Esophagus muscularis mucosa (tissue), 4 donors: ENCODE measurements at regions of chr16 and their contacts with region 1.

Region 1: DNA sequence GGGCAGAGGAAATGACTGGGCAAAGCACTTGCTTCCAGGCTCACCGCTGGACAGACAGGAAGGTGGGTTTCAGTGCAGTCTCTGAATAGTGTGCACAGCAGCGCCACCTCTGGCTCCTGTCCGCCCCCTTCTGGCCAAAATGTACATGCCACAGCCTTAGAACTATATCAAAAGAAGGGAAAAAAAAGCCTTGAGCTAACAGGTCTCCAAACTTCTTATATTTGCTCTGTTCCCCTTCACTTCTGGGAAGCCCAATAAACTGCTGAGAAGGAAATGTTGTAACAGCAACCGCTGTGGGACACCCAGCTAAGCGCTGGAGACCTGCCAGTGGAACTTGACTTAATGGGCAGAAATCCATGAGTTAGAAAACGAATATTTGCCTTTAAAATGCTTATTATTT is 17.5 kb downstream of the COG7 start:
- DNase-seq: no peak
- H3K4me3 ChIP-seq: no peak overlapping the region
- H3K27ac ChIP-seq: no peak overlapping the region
- H3K4me1 ChIP-seq: peaks cover 0 to 30% (median 15%) of the 10 kb centered on the region in 4 donors
- H3K27me3 ChIP-seq: no peaks in the 10 kb centered on the region
- CTCF ChIP-seq: peak; percentile 75 to 82 (median 77)
- EP300 ChIP-seq: no peak
- POLR2A ChIP-seq: no peak

Region 2: DNA sequence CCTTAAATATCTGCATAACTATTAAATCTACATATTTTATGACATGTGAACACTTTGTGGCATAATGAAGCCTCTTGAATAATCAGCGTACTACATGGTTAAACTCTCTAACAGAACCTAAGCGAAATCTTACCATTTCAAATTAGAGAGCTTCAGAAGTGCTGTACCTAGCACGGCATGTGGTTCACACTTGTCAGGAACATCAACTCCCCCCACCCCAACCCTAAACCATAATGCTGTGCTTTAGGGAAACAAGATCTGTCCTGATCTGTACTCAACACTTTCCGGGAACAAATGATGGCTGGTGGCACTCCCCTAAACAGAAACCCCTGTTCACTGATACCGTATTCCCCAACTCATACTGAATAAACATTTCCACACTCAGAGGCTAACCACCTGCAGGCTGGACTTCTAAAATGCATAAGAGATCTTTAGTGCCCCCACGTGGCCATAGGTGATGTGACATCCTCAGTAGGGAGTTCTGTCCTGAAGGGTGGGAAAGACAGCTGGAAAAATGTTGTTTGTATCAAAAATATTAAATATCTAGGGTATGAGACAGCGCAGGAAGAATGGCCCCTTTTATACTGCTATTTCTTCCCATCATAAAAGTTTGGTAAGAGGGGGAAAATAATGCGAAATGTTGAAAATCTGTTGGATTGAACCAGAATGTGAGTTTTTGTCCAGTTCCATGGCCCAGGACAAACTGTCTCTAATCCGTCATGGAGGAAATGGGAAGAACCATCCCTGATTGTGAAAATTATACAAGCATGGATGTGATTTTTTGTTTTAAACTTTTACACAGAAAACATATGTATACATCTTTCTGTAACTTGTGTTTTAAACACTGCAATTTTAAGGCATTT is 374.8 kb before region 1 on chr16:
- intact Hi-C with region 1: loop called (anchors 10 kb)
- DNase-seq: peak; percentile 93
- H3K4me3 ChIP-seq: no peak overlapping the region
- H3K27ac ChIP-seq: no peak overlapping the region
- H3K4me1 ChIP-seq: peaks cover 0 to 23% (median 15%) of the 10 kb centered on the region in 4 donors
- H3K27me3 ChIP-seq: no peaks in the 10 kb centered on the region
- CTCF ChIP-seq: peak; percentile 78 to 82 (median 80)
- EP300 ChIP-seq: no peak
- POLR2A ChIP-seq: no peak

Region 3: GRCh38 chr16:23182460-23183309 is 252.8 kb before region 1 on chr16 and contains the start of gene SCNN1G:
- intact Hi-C with region 1: loop called (anchors 2 kb)
- DNase-seq: no peak
- H3K4me3 ChIP-seq: peak within 1 kb of the TSS; percentile 49 to 57 (median 50)
- H3K27ac ChIP-seq: no peak within 1 kb of the TSS
- H3K4me1 ChIP-seq: peaks cover 13 to 17% (median 15%) of the 10 kb centered on the region in 4 donors
- H3K27me3 ChIP-seq: peaks cover 15 to 82% (median 18%) of the 10 kb centered on the region in 4 donors
- CTCF ChIP-seq: peak in 2 of 3 experiments; percentile 95 to 96
- EP300 ChIP-seq: no peak
- POLR2A ChIP-seq: no peak
- total RNA-seq, gene SCNN1G: 0.06 to 0.34 TPM in 2 of 4 donors, not detected in the others